ENCODE measurements at regions of chr2 and their contacts with region 1.

Region 1: GRCh38 chr2:69933839-69934613 is 19.1 kb downstream of the MXD1 start:
- DNase-seq: no peak
- ATAC-seq: no peak
- H3K4me3 ChIP-seq: no peak overlapping the region
- H3K27ac ChIP-seq: no peak overlapping the region
- H3K4me1 ChIP-seq: peaks cover 18% of the 10 kb centered on the region
- H3K27me3 ChIP-seq: no peaks in the 10 kb centered on the region
- CTCF ChIP-seq: no peak

Region 2: GRCh38 chr2:70062268-70062667 is 128.2 kb after region 1 on chr2:
- intact Hi-C with region 1: loop called in 1 of 2 experiments (anchors 5 kb)
- DNase-seq: no peak
- ATAC-seq: no peak
- H3K4me3 ChIP-seq: no peak overlapping the region
- H3K27ac ChIP-seq: no peak overlapping the region
- H3K4me1 ChIP-seq: no peaks in the 10 kb centered on the region
- H3K27me3 ChIP-seq: no peaks in the 10 kb centered on the region
- CTCF ChIP-seq: no peak